ENCODE measurements at regions of chr11 and their contacts with region 1.

Region 1: GRCh38 chr11:102794447-102794781 is 3.5 kb downstream of the MMP1 start:
- DNase-seq: no peak
- H3K4me3 Mint-ChIP-seq: no peak overlapping the region
- H3K27ac Mint-ChIP-seq: no peak overlapping the region
- H3K4me1 Mint-ChIP-seq: no peaks in the 10 kb centered on the region
- H3K27me3 Mint-ChIP-seq: no peaks in the 10 kb centered on the region

Region 2: GRCh38 chr11:102819491-102819890 is 25.1 kb after region 1 on chr11:
- intact Hi-C with region 1: loop called (anchors 1 kb)
- DNase-seq: no peak
- H3K4me3 Mint-ChIP-seq: no peak overlapping the region
- H3K27ac Mint-ChIP-seq: no peak overlapping the region
- H3K4me1 Mint-ChIP-seq: no peaks in the 10 kb centered on the region
- H3K27me3 Mint-ChIP-seq: no peaks in the 10 kb centered on the region

Region 3: GRCh38 chr11:102868339-102868738 is 73.9 kb after region 1 on chr11:
- intact Hi-C with region 1: no loop called
- DNase-seq: no peak
- H3K4me3 Mint-ChIP-seq: no peak overlapping the region
- H3K27ac Mint-ChIP-seq: no peak overlapping the region
- H3K4me1 Mint-ChIP-seq: no peaks in the 10 kb centered on the region
- H3K27me3 Mint-ChIP-seq: peaks cover 3% of the 10 kb centered on the region

Measured in activated T-helper 2 cell treated with anti-CD3 and anti-CD28 coated beads, Interferon-gamma antibody, Interleukin-2, Interleukin-4, amounts not matched to agents 10 μg/mL and 5 μg/mL and 100 μg/mL, durations not matched to agents 14 hours and 24 hours and 36 hours (primary cell).